Activated CD8-positive, alpha-beta T cell treated with anti-CD3 and anti-CD28 coated beads, Interleukin-2, amount 10 ng/mL, durations not matched to agents 7 days and 5 days (primary cell): ENCODE measurements at regions of chr15 and their contacts with region 1.

Region 1: GRCh38 chr15:31435261-31435911 is 108.8 kb downstream of the KLF13 start:
- DNase-seq: peak; percentile 92
- ATAC-seq: peak; percentile 71
- H3K4me3 Mint-ChIP-seq: peak overlapping the region; percentile 74
- H3K27ac Mint-ChIP-seq: peak overlapping the region; percentile 99
- H3K4me1 Mint-ChIP-seq: peaks cover 83% of the 10 kb centered on the region
- H3K27me3 Mint-ChIP-seq: no peaks in the 10 kb centered on the region

Region 2: GRCh38 chr15:31326156-31326732 is 109.1 kb before region 1 on chr15:
- CTCF ChIA-PET with region 1: interaction called, 6 read pairs
- POLR2A ChIA-PET with region 1: interaction called, 63 read pairs
- DNase-seq: peak; percentile 99
- ATAC-seq: peak; percentile 78
- H3K4me3 Mint-ChIP-seq: peak overlapping the region; percentile 91
- H3K27ac Mint-ChIP-seq: peak overlapping the region; percentile 97
- H3K4me1 Mint-ChIP-seq: peaks cover 58% of the 10 kb centered on the region
- H3K27me3 Mint-ChIP-seq: no peaks in the 10 kb centered on the region

Region 3: GRCh38 chr15:31379042-31379441 is 56.3 kb before region 1 on chr15:
- CTCF ChIA-PET with region 1: interaction called, 12 read pairs
- POLR2A ChIA-PET with region 1: interaction called, 5 read pairs
- DNase-seq: no peak
- ATAC-seq: no peak
- H3K4me3 Mint-ChIP-seq: no peak overlapping the region
- H3K27ac Mint-ChIP-seq: peak overlapping the region; percentile 72
- H3K4me1 Mint-ChIP-seq: peaks cover 67% of the 10 kb centered on the region
- H3K27me3 Mint-ChIP-seq: no peaks in the 10 kb centered on the region

Region 4: DNA sequence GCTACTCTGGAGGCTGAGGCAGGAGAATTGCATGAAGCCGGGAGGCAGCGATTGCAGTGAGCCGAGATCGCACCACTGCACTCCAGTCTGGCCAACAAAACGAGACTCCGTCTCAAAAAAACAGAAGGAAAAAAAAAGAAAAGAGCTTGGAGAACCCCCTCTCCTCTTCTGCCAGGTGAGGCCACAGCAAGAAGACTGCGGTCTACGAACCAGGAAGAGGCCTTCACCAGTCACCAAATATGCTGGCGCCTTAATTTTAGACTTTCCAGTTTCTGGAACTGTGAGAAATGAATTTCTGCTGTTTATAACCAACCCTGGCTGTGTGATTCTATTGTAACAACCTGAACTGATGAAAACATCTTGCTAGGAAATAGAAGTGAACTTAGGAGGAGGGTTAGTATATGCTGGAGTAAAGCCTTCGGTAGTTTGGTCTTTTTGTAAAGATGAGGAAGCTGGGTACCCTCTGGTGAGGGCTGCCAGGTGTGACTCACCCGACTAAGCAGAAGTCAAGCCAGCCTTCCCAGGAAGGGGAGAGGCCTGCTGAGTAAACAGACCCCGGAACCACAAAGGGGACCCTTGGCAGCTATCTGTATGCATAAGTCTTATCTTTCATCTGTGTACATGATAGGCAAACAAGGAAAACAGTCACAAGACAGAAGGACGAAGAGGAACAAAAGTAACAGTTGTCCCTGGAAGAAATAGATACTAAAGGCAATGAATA is 30.0 kb before region 1 on chr15:
- CTCF ChIA-PET with region 1: interaction called, 10 read pairs
- POLR2A ChIA-PET with region 1: interaction called, 14 read pairs
- DNase-seq: no peak
- ATAC-seq: peak; percentile 67
- H3K4me3 Mint-ChIP-seq: peak overlapping the region; percentile 58
- H3K27ac Mint-ChIP-seq: peak overlapping the region; percentile 88
- H3K4me1 Mint-ChIP-seq: peaks cover 35% of the 10 kb centered on the region
- H3K27me3 Mint-ChIP-seq: peaks cover 4% of the 10 kb centered on the region

Region 5: GRCh38 chr15:31472636-31473384 is 37.4 kb after region 1 on chr15:
- CTCF ChIA-PET with region 1: interaction called, 104 read pairs
- POLR2A ChIA-PET with region 1: interaction called, 30 read pairs
- DNase-seq: peak; percentile 77
- ATAC-seq: peak; percentile 96
- H3K4me3 Mint-ChIP-seq: peak overlapping the region; percentile 62
- H3K27ac Mint-ChIP-seq: peak overlapping the region; percentile 89
- H3K4me1 Mint-ChIP-seq: peaks cover 38% of the 10 kb centered on the region
- H3K27me3 Mint-ChIP-seq: no peaks in the 10 kb centered on the region